Activated CD4-positive, alpha-beta T cell treated with anti-CD3 and anti-CD28 coated beads for 36 hours (primary cell): ENCODE measurements at regions of chr2 and their contacts with region 1.

Region 1: DNA sequence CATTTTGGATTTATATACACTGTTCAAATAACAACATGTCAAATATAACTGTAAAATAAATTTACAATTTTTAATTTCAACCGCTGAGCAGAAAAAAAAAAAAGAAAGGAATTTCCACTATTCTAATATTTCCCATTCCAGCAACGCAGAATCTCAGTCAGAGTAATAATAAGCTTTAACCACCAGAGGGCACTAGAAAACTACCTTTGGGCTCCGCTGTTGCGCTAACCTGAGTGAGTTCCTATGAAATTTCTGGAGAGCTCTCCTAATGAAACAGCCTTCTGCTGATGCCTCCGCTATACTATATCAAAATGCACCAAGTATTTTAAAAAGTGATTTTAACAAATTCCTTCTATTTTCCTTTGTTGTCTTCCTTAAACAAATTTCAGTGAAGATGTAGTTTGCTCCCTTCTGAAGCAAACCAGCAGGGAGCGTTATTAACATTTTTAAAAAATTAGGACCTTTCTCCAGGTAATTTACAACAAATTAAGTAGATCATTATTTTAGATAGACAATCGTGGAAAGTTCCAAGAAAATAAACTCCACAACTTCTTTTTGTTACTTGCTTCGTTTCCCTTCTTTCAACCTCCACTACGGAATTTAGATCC is 23.0 kb downstream of the ERMN start:
- DNase-seq: peak; percentile 50
- ATAC-seq: peak; percentile 75
- H3K4me3 Mint-ChIP-seq: no peak overlapping the region
- H3K27ac Mint-ChIP-seq: no peak overlapping the region
- H3K4me1 Mint-ChIP-seq: peaks cover 30% of the 10 kb centered on the region
- H3K27me3 Mint-ChIP-seq: peaks cover 3% of the 10 kb centered on the region

Region 2: GRCh38 chr2:157312866-157313486 is 10.4 kb after region 1 on chr2:
- CTCF ChIA-PET with region 1: interaction called, 28 read pairs
- POLR2A ChIA-PET with region 1: no interaction called
- intact Hi-C with region 1: no loop called
- DNase-seq: no peak
- ATAC-seq: peak; percentile 84
- H3K4me3 Mint-ChIP-seq: no peak overlapping the region
- H3K27ac Mint-ChIP-seq: no peak overlapping the region
- H3K4me1 Mint-ChIP-seq: peaks cover 49% of the 10 kb centered on the region
- H3K27me3 Mint-ChIP-seq: no peaks in the 10 kb centered on the region

Region 3: GRCh38 chr2:157413326-157414035 is 110.9 kb after region 1 on chr2:
- CTCF ChIA-PET with region 1: interaction called, 14 read pairs
- POLR2A ChIA-PET with region 1: interaction called, 4 read pairs
- intact Hi-C with region 1: loop called in 1 of 2 experiments (anchors 2 kb)
- DNase-seq: peak; percentile 64
- ATAC-seq: peak; percentile 67
- H3K4me3 Mint-ChIP-seq: peak overlapping the region; percentile 63
- H3K27ac Mint-ChIP-seq: peak overlapping the region; percentile 100
- H3K4me1 Mint-ChIP-seq: peaks cover 89% of the 10 kb centered on the region
- H3K27me3 Mint-ChIP-seq: no peaks in the 10 kb centered on the region

Region 4: GRCh38 chr2:157492189-157492773 is 189.7 kb after region 1 on chr2:
- CTCF ChIA-PET with region 1: interaction called, 44 read pairs
- POLR2A ChIA-PET with region 1: no interaction called
- intact Hi-C with region 1: loop called (anchors 2 to 10 kb)
- DNase-seq: peak; percentile 84
- ATAC-seq: peak; percentile 90
- H3K4me3 Mint-ChIP-seq: no peak overlapping the region
- H3K27ac Mint-ChIP-seq: no peak overlapping the region
- H3K4me1 Mint-ChIP-seq: peaks cover 68% of the 10 kb centered on the region
- H3K27me3 Mint-ChIP-seq: no peaks in the 10 kb centered on the region

Region 5: DNA sequence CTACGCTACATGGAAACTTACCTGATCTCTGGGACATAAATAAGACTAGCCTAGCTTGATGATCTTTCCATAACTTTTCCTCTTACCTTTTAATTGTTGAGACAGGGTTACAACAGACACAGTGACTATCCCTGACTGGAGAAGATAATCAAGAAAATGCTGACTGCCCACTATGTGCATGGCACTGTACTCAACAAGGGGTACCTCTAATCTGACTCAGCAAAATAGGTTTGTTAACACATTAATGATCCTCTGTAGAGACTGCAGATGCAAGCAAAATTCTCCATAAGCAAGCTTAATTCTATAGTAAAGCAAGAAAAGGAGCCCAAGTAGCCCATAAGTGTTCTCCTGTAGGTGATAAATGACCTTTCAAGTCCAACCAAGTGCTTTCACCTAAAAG is 300.6 kb after region 1 on chr2:
- CTCF ChIA-PET with region 1: interaction called, 36 read pairs
- POLR2A ChIA-PET with region 1: no interaction called
- intact Hi-C with region 1: no loop called
- DNase-seq: no peak
- ATAC-seq: no peak
- H3K4me3 Mint-ChIP-seq: no peak overlapping the region
- H3K27ac Mint-ChIP-seq: no peak overlapping the region
- H3K4me1 Mint-ChIP-seq: no peaks in the 10 kb centered on the region
- H3K27me3 Mint-ChIP-seq: peaks cover 2% of the 10 kb centered on the region

Region 6: DNA sequence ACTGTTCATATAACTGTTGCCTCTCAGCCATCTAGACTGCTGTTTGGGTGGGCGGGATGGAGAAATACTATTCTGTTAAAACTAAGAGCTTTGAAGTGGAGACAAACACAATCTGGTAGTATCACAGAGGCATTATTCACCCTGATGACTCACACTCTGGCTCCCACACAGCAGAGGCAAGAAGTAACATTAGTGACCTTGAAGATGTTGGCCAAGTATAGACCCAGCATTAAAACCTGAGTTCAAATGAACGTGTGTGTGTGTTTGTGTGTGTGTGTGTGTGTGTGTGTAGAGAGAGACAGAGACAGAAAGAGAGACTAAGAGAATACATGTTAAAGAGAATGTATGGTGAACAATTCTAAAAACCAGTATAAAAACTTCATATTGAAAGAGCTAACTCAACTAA is 596.0 kb after region 1 on chr2:
- CTCF ChIA-PET with region 1: no interaction called
- POLR2A ChIA-PET with region 1: no interaction called
- intact Hi-C with region 1: loop called in 1 of 2 experiments (anchors 10 kb)
- DNase-seq: peak; percentile 86
- ATAC-seq: peak; percentile 73
- H3K4me3 Mint-ChIP-seq: peak overlapping the region; percentile 69
- H3K27ac Mint-ChIP-seq: peak overlapping the region; percentile 100
- H3K4me1 Mint-ChIP-seq: peaks cover 83% of the 10 kb centered on the region
- H3K27me3 Mint-ChIP-seq: no peaks in the 10 kb centered on the region